MCF 10A (cell line): ENCODE measurements at regions of chr10 and their contacts with region 1.

Region 1: GRCh38 chr10:114520453-114520852 is 116.2 kb upstream of the AFAP1L2 start:
- DNase-seq: peak; percentile 93
- H3K4me3 Mint-ChIP-seq: peak overlapping the region; percentile 13
- H3K27ac Mint-ChIP-seq: peak overlapping the region; percentile 84
- H3K4me1 Mint-ChIP-seq: peaks cover 53% of the 10 kb centered on the region
- H3K27me3 Mint-ChIP-seq: no peaks in the 10 kb centered on the region
- CTCF ChIP-seq: no peak

Region 2: GRCh38 chr10:114356751-114357514 is 163.5 kb before region 1 on chr10:
- CTCF ChIA-PET with region 1: no interaction called
- POLR2A ChIA-PET with region 1: no interaction called
- intact Hi-C with region 1: no loop called
- DNase-seq: peak; percentile 52
- H3K4me3 Mint-ChIP-seq: peak overlapping the region; percentile 2
- H3K27ac Mint-ChIP-seq: peak overlapping the region; percentile 43
- H3K4me1 Mint-ChIP-seq: peaks cover 12% of the 10 kb centered on the region
- H3K27me3 Mint-ChIP-seq: no peaks in the 10 kb centered on the region
- CTCF ChIP-seq: no peak

Region 3: DNA sequence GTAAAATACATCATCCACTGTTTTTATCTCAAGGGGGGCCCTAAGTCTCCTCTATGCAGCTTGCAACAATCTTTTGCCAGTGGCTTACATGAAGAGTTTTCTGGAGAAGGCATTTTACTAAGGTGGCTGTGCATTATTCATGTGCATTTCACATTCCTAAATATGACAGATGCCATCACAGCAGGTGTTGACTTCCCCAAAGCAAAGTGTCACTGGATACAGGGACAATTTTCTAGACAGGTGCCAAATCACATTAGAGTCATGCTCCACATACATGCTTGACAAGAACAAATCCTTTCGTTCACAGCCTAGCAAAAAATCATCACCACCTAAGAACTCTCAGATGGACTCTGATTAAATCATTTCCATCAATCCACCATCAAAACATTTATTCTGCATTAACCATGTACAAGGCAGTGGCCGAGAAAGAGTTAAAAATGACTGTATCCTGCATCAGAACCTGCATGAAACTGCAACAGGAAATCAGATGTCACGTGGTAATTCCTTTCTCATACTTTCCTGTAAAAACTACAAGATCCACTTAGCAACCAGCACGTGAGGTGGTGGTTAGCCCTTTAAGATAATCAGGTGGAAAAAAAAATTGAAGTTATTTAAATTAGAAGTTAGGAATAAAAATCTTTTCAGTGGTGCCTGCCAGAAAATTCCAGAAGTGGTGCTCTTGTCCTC is 28.0 kb before region 1 on chr10:
- CTCF ChIA-PET with region 1: interaction called, 3 read pairs
- POLR2A ChIA-PET with region 1: interaction called, 481 read pairs
- intact Hi-C with region 1: no loop called
- DNase-seq: no peak
- H3K4me3 Mint-ChIP-seq: no peak overlapping the region
- H3K27ac Mint-ChIP-seq: no peak overlapping the region
- H3K4me1 Mint-ChIP-seq: peaks cover 25% of the 10 kb centered on the region
- H3K27me3 Mint-ChIP-seq: no peaks in the 10 kb centered on the region
- CTCF ChIP-seq: no peak

Region 4: GRCh38 chr10:114532226-114532625 is 11.8 kb after region 1 on chr10:
- CTCF ChIA-PET with region 1: no interaction called
- POLR2A ChIA-PET with region 1: interaction called, 54 read pairs
- intact Hi-C with region 1: no loop called
- DNase-seq: no peak
- H3K4me3 Mint-ChIP-seq: no peak overlapping the region
- H3K27ac Mint-ChIP-seq: no peak overlapping the region
- H3K4me1 Mint-ChIP-seq: no peaks in the 10 kb centered on the region
- H3K27me3 Mint-ChIP-seq: no peaks in the 10 kb centered on the region
- CTCF ChIP-seq: no peak